Caco-2 (cell line): ENCODE measurements at regions of chr3 and their contacts with region 1.

Region 1: DNA sequence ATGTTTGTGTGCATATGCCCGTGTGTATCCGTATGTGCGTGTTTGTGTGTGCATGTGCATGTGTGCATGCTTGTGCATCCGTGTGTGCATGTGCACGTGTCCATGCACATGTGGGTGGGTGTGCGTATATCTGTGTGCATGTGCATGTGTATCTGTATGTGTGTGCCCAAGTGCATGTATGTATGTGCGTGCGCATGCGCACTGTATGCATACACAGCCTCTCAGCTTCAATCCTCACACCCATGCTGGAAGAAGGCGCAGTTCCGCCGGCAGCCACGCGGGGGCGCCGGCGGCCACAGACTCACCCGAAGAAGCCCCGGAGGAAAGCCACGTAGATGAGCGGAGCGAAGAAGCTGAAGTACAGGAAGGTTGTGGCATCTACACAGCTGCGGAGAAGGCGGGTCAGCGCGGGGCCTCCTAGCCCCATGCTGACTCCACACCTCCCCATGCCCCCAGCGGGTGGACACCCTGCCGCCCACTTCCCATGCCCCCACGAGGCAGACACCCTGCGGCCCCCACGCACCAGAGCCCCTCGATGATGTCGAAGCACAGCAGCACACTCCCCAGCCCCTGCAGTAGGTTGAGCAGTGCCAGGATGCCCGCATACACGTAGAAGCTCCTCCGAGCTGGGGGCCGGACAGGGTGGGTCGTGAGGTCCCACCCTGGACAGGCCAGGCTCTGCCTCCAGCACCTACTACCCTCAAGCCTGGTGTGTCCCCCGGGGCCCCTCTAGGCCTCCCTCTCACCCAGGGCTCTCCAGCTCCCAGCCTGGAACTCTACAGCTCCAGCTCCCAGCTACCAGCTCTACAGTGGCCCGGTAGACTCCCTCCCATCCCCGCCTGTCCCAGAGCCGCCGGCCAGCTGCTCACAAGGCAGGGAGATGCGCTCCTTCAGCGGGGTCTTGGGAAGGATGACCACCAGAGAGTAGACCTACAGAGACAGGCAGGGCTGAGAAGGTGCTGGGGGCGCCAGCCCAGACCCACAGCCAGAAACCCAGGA is 15.4 kb downstream of the TPRA1 start:
- DNase-seq: peak; percentile 75 to 77
- H3K4me3 ChIP-seq: no peak overlapping the region
- H3K4me3 Mint-ChIP-seq: no peak overlapping the region
- H3K27ac Mint-ChIP-seq: no peak overlapping the region
- H3K4me1 ChIP-seq: no peaks in the 10 kb centered on the region
- H3K4me1 Mint-ChIP-seq: no peaks in the 10 kb centered on the region
- H3K27me3 ChIP-seq: no peaks in the 10 kb centered on the region
- H3K27me3 Mint-ChIP-seq: no peaks in the 10 kb centered on the region
- CTCF ChIP-seq: peak; percentile 91 to 98

Region 2: DNA sequence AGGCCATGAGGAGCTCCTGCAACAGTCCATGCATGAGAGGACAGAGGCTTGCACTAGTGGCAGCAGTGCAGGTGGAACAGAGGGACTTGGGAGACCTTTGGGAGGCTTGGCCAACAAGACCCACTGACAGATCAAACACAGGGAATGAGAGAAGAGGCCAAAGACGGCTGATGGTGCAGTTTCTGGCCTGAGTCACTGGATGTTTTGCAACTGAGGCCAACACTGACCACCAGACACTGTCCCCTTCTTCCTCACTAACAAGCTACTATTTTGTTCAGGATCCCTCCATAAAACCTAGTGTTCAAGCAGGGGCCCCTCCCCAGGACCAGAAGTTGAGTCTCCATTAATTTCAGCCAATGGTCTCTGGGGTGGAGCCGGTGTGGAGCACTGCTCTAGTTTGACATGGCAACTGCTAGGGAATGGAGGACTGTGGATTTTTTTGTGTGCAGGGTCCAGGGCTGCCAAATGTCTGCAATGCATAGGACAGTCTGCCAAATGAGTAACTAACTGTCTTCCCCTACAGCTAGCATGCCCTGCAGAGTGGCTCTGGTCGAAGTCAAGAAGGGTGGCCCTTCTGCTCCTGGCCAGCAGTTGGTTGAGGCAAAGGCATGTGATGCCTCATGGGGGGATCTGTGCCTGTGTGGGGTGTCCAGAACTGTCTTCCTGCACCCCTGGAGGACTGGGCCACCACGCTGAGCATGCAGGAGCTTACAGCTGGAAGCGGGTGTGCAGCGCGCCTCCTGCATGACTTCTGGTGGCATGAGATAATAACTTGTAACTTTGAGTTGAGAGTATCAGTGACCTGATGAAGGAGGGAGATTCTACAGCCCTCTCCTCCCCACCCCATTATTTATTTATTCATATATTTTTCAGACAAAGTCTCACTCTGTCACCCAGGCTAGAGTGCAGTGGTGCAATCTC is 10.6 kb after region 1 on chr3:
- CTCF ChIA-PET with region 1: interaction called, 22 read pairs
- POLR2A ChIA-PET with region 1: interaction called, 3 read pairs
- intact Hi-C with region 1: loop called (anchors 1 kb)
- DNase-seq: no peak
- H3K4me3 ChIP-seq: no peak overlapping the region
- H3K4me3 Mint-ChIP-seq: peak overlapping the region; percentile 4
- H3K27ac Mint-ChIP-seq: peak overlapping the region; percentile 45
- H3K4me1 ChIP-seq: peaks cover 24% of the 10 kb centered on the region
- H3K4me1 Mint-ChIP-seq: peaks cover 20% of the 10 kb centered on the region
- H3K27me3 ChIP-seq: no peaks in the 10 kb centered on the region
- H3K27me3 Mint-ChIP-seq: no peaks in the 10 kb centered on the region
- CTCF ChIP-seq: no peak

Region 3: GRCh38 chr3:127590593-127591477 is 15.7 kb after region 1 on chr3 and contains the start of gene TPRA1:
- CTCF ChIA-PET with region 1: interaction called, 22 read pairs
- POLR2A ChIA-PET with region 1: interaction called, 3 read pairs
- intact Hi-C with region 1: loop called (anchors 1 kb)
- DNase-seq: peak; percentile 94 to 96
- H3K4me3 ChIP-seq: peak within 1 kb of the TSS; percentile 88
- H3K4me3 Mint-ChIP-seq: peak within 1 kb of the TSS; percentile 87
- H3K27ac Mint-ChIP-seq: peak within 1 kb of the TSS; percentile 90
- H3K4me1 ChIP-seq: peaks cover 19% of the 10 kb centered on the region
- H3K4me1 Mint-ChIP-seq: peaks cover 26% of the 10 kb centered on the region
- H3K27me3 ChIP-seq: no peaks in the 10 kb centered on the region
- H3K27me3 Mint-ChIP-seq: no peaks in the 10 kb centered on the region
- CTCF ChIP-seq: peak in 1 of 2 experiments; percentile 34
- total RNA-seq, gene TPRA1: 34.5 and 36.8 TPM in 2 replicates

Region 4: GRCh38 chr3:127598841-127599570 is 23.8 kb after region 1 on chr3:
- CTCF ChIA-PET with region 1: interaction called, 28 read pairs
- POLR2A ChIA-PET with region 1: interaction called, 11 read pairs
- intact Hi-C with region 1: no loop called
- DNase-seq: no peak
- H3K4me3 ChIP-seq: peak overlapping the region; percentile 47
- H3K4me3 Mint-ChIP-seq: peak overlapping the region; percentile 79
- H3K27ac Mint-ChIP-seq: peak overlapping the region; percentile 93
- H3K4me1 ChIP-seq: no peaks in the 10 kb centered on the region
- H3K4me1 Mint-ChIP-seq: peaks cover 22% of the 10 kb centered on the region
- H3K27me3 ChIP-seq: no peaks in the 10 kb centered on the region
- H3K27me3 Mint-ChIP-seq: no peaks in the 10 kb centered on the region
- CTCF ChIP-seq: no peak

Region 5: GRCh38 chr3:127747723-127748521 is 172.7 kb after region 1 on chr3:
- CTCF ChIA-PET with region 1: interaction called, 11 read pairs
- POLR2A ChIA-PET with region 1: no interaction called
- intact Hi-C with region 1: no loop called
- DNase-seq: no peak
- H3K4me3 ChIP-seq: no peak overlapping the region
- H3K4me3 Mint-ChIP-seq: no peak overlapping the region
- H3K27ac Mint-ChIP-seq: no peak overlapping the region
- H3K4me1 ChIP-seq: peaks cover 34% of the 10 kb centered on the region
- H3K4me1 Mint-ChIP-seq: peaks cover 39% of the 10 kb centered on the region
- H3K27me3 ChIP-seq: no peaks in the 10 kb centered on the region
- H3K27me3 Mint-ChIP-seq: no peaks in the 10 kb centered on the region
- CTCF ChIP-seq: no peak